GM12878 (cell line): ENCODE measurements at regions of chr18 and their contacts with region 1.

Region 1: DNA sequence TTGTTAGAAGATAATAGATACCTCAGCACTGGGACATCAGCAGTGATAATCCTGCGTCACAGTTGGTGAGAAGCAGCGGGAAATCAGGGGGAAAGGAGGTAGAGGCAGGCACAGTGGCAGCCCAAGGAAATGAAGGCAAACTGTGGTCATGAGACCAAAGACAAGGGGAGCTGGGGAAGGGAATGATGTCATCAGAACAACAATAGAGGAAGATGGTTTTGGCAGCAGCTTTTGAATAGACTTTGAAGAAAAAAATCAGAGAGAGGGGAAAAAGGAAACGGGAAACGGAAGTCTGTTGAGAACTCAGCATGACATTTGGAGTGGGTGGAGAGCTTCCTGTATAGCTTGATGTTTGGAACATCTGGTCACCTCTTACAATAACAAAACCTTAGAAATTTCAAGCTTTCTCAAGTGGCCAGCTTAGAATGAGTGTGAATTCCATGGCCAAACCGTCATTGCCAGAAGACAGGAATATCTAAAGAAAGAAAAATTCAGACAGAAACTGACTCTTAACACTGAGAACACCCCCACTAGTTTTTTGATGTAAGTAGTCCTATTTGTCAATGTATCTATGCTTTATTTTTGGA is 18.4 kb upstream of the YES1 start:
- DNase-seq: no peak
- ATAC-seq: peak; percentile 62
- H3K4me3 ChIP-seq: no peak overlapping the region
- H3K27ac ChIP-seq: no peak overlapping the region
- H3K4me1 ChIP-seq: peaks cover 7% of the 10 kb centered on the region
- H3K27me3 ChIP-seq: no peaks in the 10 kb centered on the region
- CTCF ChIP-seq: no peak
- EP300 ChIP-seq: no peak
- POLR2A ChIP-seq: no peak
- RAD21 ChIP-seq: no peak

Region 2: DNA sequence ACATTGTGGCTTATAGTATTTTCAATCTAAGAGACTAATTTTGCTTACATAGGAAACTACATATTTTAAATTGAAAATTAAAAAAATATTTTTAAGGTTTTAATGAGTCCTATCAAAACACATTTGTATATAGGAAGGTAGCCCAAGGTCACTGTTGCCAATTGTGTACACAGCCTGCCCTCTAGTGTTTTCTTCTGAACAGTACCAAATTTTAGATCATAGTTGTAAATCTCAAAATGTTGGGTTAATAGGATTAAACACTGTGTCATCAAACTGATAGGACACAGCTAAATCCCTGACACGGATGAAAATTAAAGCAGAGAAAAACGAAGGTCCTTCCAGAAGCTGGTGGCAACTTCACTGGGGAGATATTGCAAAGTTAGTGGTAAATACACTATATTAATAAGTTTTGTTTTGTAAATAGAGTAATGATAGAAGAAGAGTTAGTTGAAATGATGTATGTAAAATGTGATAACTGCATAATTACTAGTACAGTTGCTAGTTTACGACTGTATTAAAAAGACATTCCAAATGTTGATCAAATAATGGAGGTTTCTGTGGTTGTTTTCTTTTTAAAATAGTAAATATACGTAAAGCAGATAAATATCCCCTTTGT is 213.9 kb before region 1 on chr18:
- CTCF ChIA-PET with region 1: interaction called, 251 read pairs
- POLR2A ChIA-PET with region 1: no interaction called
- RAD21 ChIA-PET with region 1: interaction called, 168 read pairs
- SMC1A ChIA-PET with region 1: interaction called, 188 read pairs
- in situ Hi-C with region 1: loop called (anchors 5 kb)
- intact Hi-C with region 1: no loop called
- DNase-seq: no peak
- ATAC-seq: peak; percentile 72
- H3K4me3 ChIP-seq: no peak overlapping the region
- H3K27ac ChIP-seq: no peak overlapping the region
- H3K4me1 ChIP-seq: no peaks in the 10 kb centered on the region
- H3K27me3 ChIP-seq: no peaks in the 10 kb centered on the region
- CTCF ChIP-seq: peak; percentile 49 to 58 (median 52); a peak in 5 of 6 replicates
- EP300 ChIP-seq: no peak
- POLR2A ChIP-seq: no peak
- RAD21 ChIP-seq: peak; percentile 79

Region 3: DNA sequence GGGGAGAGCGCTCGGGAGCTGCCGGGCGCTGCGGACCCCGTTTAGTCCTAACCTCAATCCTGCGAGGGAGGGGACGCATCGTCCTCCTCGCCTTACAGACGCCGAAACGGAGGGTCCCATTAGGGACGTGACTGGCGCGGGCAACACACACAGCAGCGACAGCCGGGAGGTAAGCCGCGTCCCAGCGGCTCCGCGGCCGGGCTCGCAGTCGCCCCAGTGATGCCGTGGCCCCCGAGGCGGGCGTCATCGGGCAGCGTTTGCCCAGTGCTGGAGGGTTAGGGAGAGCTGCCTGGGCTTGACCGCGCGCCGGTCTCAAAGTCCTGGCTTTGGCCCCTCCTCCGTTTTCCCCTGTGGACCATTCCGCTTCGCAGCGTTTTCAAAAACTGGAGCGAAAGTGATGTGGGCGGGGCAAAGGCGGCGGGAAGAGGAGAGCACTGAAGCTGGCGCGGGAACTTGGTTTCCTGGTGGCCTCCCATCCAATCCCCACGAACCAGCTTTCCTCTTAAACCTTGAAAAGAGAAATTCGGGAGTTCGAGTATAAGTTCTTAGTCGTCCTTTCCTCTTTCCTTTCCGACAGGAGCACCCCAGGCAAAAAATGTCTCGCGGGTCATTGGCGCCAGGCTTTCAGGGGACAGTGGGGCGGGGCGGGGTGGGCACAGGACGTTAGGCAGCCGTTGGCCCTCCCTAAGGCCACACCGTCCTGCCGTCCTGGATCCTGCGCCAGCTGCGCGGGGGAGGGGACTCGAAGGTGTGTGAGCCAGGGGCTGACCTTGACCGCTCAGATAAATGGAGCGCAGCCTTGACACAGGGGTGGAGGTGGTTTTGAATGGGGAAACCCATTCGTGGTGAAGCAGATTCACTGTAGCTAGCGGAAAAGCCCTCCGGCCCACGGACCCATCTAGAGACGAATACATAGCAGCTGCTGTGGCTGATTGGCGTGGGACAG is 172.1 kb before region 1 on chr18:
- CTCF ChIA-PET with region 1: interaction called, 18 read pairs
- POLR2A ChIA-PET with region 1: no interaction called
- RAD21 ChIA-PET with region 1: interaction called, 12 read pairs
- SMC1A ChIA-PET with region 1: interaction called, 12 read pairs
- in situ Hi-C with region 1: no loop called
- intact Hi-C with region 1: no loop called
- DNase-seq: peak; percentile 57
- ATAC-seq: peak; percentile 82
- H3K4me3 ChIP-seq: peak overlapping the region; percentile 92
- H3K27ac ChIP-seq: peak overlapping the region; percentile 86
- H3K4me1 ChIP-seq: peaks cover 7% of the 10 kb centered on the region
- H3K27me3 ChIP-seq: no peaks in the 10 kb centered on the region
- CTCF ChIP-seq: no peak
- EP300 ChIP-seq: no peak
- POLR2A ChIP-seq: peak; percentile 80
- RAD21 ChIP-seq: no peak

Region 4: GRCh38 chr18:741931-742512 is 88.4 kb before region 1 on chr18:
- CTCF ChIA-PET with region 1: interaction called, 295 read pairs
- POLR2A ChIA-PET with region 1: interaction called, 4 read pairs
- RAD21 ChIA-PET with region 1: interaction called, 158 read pairs
- SMC1A ChIA-PET with region 1: interaction called, 222 read pairs
- in situ Hi-C with region 1: loop called (anchors 5 kb)
- intact Hi-C with region 1: loop called (anchors 1 kb)
- DNase-seq: peak; percentile 30
- ATAC-seq: peak; percentile 93
- H3K4me3 ChIP-seq: no peak overlapping the region
- H3K27ac ChIP-seq: no peak overlapping the region
- H3K4me1 ChIP-seq: no peaks in the 10 kb centered on the region
- H3K27me3 ChIP-seq: no peaks in the 10 kb centered on the region
- CTCF ChIP-seq: peak; percentile 52 to 79 (median 65); a peak in 5 of 6 replicates
- EP300 ChIP-seq: no peak
- POLR2A ChIP-seq: no peak
- RAD21 ChIP-seq: peak; percentile 91

Region 5: DNA sequence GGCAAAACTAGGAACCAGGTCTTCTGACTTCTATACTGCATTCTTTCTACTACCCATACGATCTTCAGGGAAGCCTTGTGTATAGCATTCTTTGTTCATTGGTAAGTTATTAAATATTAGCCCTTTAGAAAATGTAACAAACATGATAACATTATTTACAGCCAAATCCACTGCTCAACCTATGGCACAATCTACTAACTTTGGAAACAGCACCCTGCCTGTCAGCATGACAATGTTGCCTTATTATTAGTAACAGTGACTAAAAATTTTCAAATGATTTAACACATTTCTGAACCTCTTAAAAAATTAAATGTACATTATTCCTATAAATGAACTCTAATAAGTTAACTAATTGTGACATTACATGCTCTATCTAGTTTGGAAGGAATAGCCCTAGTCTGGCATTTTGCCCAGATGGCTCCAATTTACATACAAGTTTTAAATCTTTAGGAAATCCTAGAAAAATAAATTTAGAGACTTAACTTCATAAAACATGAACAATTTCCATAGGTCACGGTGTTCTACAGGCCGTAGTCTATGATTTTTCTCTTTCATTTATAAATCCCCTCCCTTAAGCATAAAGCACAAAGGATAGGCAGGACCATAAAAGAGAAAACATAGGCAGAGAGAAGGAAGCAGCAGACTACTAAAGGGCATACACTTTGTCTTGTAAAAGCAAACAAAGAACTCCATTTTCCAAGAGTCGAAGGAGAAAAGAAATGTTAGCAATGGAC is 52.0 kb before region 1 on chr18:
- CTCF ChIA-PET with region 1: interaction called, 13 read pairs
- POLR2A ChIA-PET with region 1: no interaction called
- RAD21 ChIA-PET with region 1: interaction called, 4 read pairs
- SMC1A ChIA-PET with region 1: interaction called, 10 read pairs
- in situ Hi-C with region 1: no loop called
- intact Hi-C with region 1: no loop called
- DNase-seq: no peak
- ATAC-seq: no peak; the same call in 2 of the 3 replicates
- H3K4me3 ChIP-seq: no peak overlapping the region
- H3K27ac ChIP-seq: no peak overlapping the region
- H3K4me1 ChIP-seq: no peaks in the 10 kb centered on the region
- H3K27me3 ChIP-seq: no peaks in the 10 kb centered on the region
- CTCF ChIP-seq: no peak
- EP300 ChIP-seq: no peak
- POLR2A ChIP-seq: no peak
- RAD21 ChIP-seq: no peak

Region 6: GRCh38 chr18:812376-813171 is 17.8 kb before region 1 on chr18:
- CTCF ChIA-PET with region 1: interaction called, 82 read pairs
- POLR2A ChIA-PET with region 1: no interaction called
- RAD21 ChIA-PET with region 1: interaction called, 45 read pairs
- SMC1A ChIA-PET with region 1: interaction called, 91 read pairs
- in situ Hi-C with region 1: no loop called
- intact Hi-C with region 1: no loop called
- DNase-seq: peak; percentile 39
- ATAC-seq: peak; percentile 77
- H3K4me3 ChIP-seq: peak overlapping the region; percentile 67
- H3K27ac ChIP-seq: peak overlapping the region; percentile 81
- H3K4me1 ChIP-seq: no peaks in the 10 kb centered on the region
- H3K27me3 ChIP-seq: no peaks in the 10 kb centered on the region
- CTCF ChIP-seq: no peak
- EP300 ChIP-seq: peak in 1 of 2 experiments; percentile 41; a peak in 1 of 4 replicates
- POLR2A ChIP-seq: peak; percentile 74
- RAD21 ChIP-seq: no peak

Region 7: DNA sequence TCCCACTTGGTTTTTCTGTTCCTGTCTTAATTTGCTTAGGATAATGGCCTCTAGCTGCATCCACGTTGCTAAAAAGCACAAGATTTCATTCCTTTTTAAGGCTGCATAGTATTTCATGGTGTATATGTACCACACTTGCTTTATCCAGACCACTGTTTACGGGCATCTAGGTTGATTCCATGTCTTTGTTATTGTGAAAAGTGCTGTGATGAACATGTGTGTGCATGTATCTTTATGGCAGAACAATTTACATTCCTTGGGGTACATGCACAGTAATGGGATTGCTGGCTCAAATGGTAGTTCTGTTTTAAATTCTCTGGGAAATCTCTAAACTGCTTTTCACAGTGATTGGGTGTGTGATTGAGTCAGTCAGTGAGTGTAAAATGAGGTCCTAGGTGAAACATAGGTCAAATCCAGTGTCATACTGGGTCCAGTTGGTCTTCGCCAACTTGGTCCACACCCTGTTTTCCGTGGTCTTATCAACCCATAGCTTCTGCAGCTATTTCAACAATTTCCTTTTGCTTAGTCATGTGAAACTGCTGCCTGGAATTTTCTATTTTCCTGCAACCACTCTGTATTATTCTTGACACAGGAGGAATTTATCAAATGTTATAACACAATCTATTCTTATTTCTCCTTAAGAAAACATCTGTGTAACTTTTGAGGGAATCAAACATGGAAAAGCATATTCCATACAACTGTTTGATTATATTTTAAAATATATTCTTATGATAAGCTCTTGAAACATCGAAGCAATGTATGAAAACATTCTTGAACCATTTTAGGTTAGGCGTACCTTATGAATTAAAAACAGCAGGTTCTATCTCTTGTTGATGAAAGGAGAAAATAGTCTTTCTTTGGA is 157.1 kb after region 1 on chr18:
- CTCF ChIA-PET with region 1: no interaction called
- POLR2A ChIA-PET with region 1: no interaction called
- RAD21 ChIA-PET with region 1: no interaction called
- SMC1A ChIA-PET with region 1: no interaction called
- in situ Hi-C with region 1: no loop called
- intact Hi-C with region 1: no loop called
- DNase-seq: no peak
- ATAC-seq: no peak
- H3K4me3 ChIP-seq: no peak overlapping the region
- H3K27ac ChIP-seq: no peak overlapping the region
- H3K4me1 ChIP-seq: no peaks in the 10 kb centered on the region
- H3K27me3 ChIP-seq: no peaks in the 10 kb centered on the region
- CTCF ChIP-seq: no peak
- EP300 ChIP-seq: no peak
- POLR2A ChIP-seq: no peak
- RAD21 ChIP-seq: no peak

Region 8: GRCh38 chr18:1048032-1048431 is 217.6 kb after region 1 on chr18:
- CTCF ChIA-PET with region 1: no interaction called
- POLR2A ChIA-PET with region 1: no interaction called
- RAD21 ChIA-PET with region 1: no interaction called
- SMC1A ChIA-PET with region 1: no interaction called
- in situ Hi-C with region 1: no loop called
- intact Hi-C with region 1: no loop called
- DNase-seq: no peak
- ATAC-seq: no peak
- H3K4me3 ChIP-seq: no peak overlapping the region
- H3K27ac ChIP-seq: no peak overlapping the region
- H3K4me1 ChIP-seq: no peaks in the 10 kb centered on the region
- H3K27me3 ChIP-seq: no peaks in the 10 kb centered on the region
- CTCF ChIP-seq: no peak
- EP300 ChIP-seq: no peak
- POLR2A ChIP-seq: no peak
- RAD21 ChIP-seq: no peak